HepG2 (cell line): ENCODE measurements at regions of chr1 and their contacts with region 1.

Region 1: GRCh38 chr1:161098210-161099068 is at the start of gene KLHDC9:
- DNase-seq: peak; percentile 87
- ATAC-seq: peak; percentile 93
- H3K4me3 ChIP-seq: peak within 1 kb of the TSS; percentile 60 to 90 (median 87)
- H3K27ac ChIP-seq: peak within 1 kb of the TSS; percentile 41
- H3K4me1 ChIP-seq: peaks cover 7% of the 10 kb centered on the region
- H3K27me3 ChIP-seq: peaks cover 0 to 3% of the 10 kb centered on the region in 2 experiments; a peak in 1 of 5 replicates
- CTCF ChIP-seq: peak; percentile 50
- EP300 ChIP-seq: no peak
- POLR2A ChIP-seq: no peak
- RAD21 ChIP-seq: no peak; the same call in 1 of the 2 replicates
- total RNA-seq, gene KLHDC9: 2.9 and 4.0 TPM in 2 replicates

Region 2: DNA sequence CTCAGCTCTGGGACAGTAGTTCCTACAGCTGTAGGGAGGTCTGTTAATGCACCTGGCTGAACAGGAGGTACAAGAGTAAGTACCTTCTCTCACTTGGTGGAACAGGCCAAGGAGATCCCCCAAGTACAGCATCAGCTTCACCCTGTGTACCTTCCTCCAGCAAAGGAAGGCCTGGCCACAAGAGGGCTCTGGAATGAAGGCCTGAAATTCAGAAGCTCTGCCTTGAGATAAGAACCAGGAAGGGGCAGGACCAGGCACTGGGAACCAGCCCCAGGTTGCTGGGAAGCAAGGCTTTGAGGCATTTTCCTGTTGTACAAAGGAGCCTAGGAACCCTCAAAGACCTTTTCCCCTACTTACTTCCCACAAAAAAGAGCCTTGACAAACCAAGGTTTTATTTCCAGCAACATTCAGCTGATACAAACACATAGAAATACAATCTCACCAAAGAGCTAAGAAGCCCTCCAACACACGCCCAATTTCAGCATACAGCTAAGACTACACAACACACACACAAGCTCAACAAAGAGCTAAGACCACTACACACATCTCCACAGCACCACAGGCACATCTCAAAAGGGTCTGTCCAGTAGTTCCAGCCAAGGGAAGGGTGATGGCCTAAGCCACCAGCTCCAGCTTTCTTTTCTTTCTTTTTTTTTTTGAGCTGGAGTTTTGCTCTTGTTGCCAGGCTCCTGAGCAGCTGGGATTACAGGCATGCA is 101.0 kb before region 1 on chr1:
- CTCF ChIA-PET with region 1: interaction called, 16 read pairs
- POLR2A ChIA-PET with region 1: no interaction called
- in situ Hi-C with region 1: loop called (anchors 10 kb)
- intact Hi-C with region 1: loop called (anchors 2 kb)
- DNase-seq: peak; percentile 61
- ATAC-seq: peak; percentile 95
- H3K4me3 ChIP-seq: no peak overlapping the region
- H3K27ac ChIP-seq: no peak overlapping the region
- H3K4me1 ChIP-seq: peaks cover 11% of the 10 kb centered on the region
- H3K27me3 ChIP-seq: no peaks in the 10 kb centered on the region
- CTCF ChIP-seq: peak; percentile 84
- EP300 ChIP-seq: no peak
- POLR2A ChIP-seq: no peak
- RAD21 ChIP-seq: peak; percentile 49; the same call in 1 of the 2 replicates

Region 3: GRCh38 chr1:161054805-161055204 is 43.6 kb before region 1 on chr1:
- CTCF ChIA-PET with region 1: no interaction called
- POLR2A ChIA-PET with region 1: no interaction called
- in situ Hi-C with region 1: loop called (anchors 5 kb)
- intact Hi-C with region 1: no loop called
- DNase-seq: no peak
- ATAC-seq: no peak
- H3K4me3 ChIP-seq: no peak overlapping the region
- H3K27ac ChIP-seq: no peak overlapping the region
- H3K4me1 ChIP-seq: peaks cover 10% of the 10 kb centered on the region
- H3K27me3 ChIP-seq: no peaks in the 10 kb centered on the region
- CTCF ChIP-seq: no peak
- EP300 ChIP-seq: no peak
- POLR2A ChIP-seq: no peak
- RAD21 ChIP-seq: no peak

Region 4: GRCh38 chr1:161071886-161072371 is 26.5 kb before region 1 on chr1:
- CTCF ChIA-PET with region 1: interaction called, 50 read pairs
- POLR2A ChIA-PET with region 1: interaction called, 5 read pairs
- in situ Hi-C with region 1: no loop called
- intact Hi-C with region 1: loop called (anchors 1 kb)
- DNase-seq: peak; percentile 68
- ATAC-seq: peak; percentile 72
- H3K4me3 ChIP-seq: no peak overlapping the region
- H3K27ac ChIP-seq: peak overlapping the region; percentile 12
- H3K4me1 ChIP-seq: peaks cover 35% of the 10 kb centered on the region
- H3K27me3 ChIP-seq: no peaks in the 10 kb centered on the region
- CTCF ChIP-seq: peak; percentile 80
- EP300 ChIP-seq: no peak
- POLR2A ChIP-seq: no peak
- RAD21 ChIP-seq: peak; percentile 67

Region 5: DNA sequence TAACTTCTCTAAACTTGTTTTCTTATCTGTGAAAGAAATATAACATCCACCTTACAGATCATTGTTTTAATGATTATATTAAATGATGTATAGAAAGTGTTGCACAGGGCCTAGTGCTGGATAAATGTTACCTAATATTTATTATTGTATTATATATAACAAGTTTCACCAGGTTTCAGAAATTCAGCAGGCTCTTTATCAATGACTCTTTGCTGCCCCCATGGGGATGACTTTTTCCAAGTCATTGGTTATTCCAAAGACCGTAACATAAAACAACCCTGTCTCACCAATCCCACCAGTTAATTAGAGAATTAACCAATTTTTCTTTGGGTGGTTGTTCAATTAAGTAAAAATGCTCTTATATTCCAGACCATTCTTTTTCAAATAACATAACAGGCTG is 41.3 kb after region 1 on chr1:
- CTCF ChIA-PET with region 1: interaction called, 8 read pairs
- POLR2A ChIA-PET with region 1: no interaction called
- in situ Hi-C with region 1: no loop called
- intact Hi-C with region 1: loop called (anchors 2 kb)
- DNase-seq: peak; percentile 56
- ATAC-seq: peak; percentile 54
- H3K4me3 ChIP-seq: no peak overlapping the region
- H3K27ac ChIP-seq: no peak overlapping the region
- H3K4me1 ChIP-seq: no peaks in the 10 kb centered on the region
- H3K27me3 ChIP-seq: no peaks in the 10 kb centered on the region
- CTCF ChIP-seq: peak; percentile 52
- EP300 ChIP-seq: no peak
- POLR2A ChIP-seq: no peak
- RAD21 ChIP-seq: 0 out of 2 replicates have a peak, but pooled peaks have one; percentile 22